ENCODE measurements at regions of chr1 and their contacts with region 1.

Region 1: DNA sequence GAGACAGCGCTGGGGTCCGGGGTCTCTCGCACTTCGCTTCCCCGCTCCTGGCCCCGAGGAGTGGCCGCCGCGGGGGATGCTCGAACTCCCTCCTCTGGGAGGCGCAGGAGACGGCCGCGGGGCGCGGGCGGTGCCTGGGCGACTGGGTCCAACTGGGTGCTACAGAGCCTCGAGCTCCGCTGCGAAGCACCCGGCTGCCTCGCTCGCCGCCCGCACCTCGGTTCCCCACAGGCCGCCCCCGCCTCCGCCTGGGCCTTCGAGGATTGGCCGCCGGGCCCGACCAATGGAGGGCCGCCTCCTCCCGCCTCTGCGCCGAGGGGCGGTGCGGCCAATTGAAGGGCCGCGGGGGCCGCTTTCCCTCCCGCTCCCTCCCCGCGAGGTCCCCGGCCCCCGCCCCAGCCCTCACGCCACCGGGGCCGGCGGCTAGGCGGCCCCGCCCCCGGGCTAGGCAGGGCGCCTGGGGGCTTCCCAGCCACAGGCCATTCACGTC is at the start of gene CNN3:
- DNase-seq: peak; percentile 89 to 96 (median 94)
- ATAC-seq: peak; percentile 90
- H3K4me3 ChIP-seq: peak within 1 kb of the TSS; percentile 75
- H3K4me1 ChIP-seq: peaks cover 34% of the 10 kb centered on the region
- CTCF ChIP-seq: no peak
- total RNA-seq, gene CNN3: 61.3 to 165 (median 129) TPM

Region 2: DNA sequence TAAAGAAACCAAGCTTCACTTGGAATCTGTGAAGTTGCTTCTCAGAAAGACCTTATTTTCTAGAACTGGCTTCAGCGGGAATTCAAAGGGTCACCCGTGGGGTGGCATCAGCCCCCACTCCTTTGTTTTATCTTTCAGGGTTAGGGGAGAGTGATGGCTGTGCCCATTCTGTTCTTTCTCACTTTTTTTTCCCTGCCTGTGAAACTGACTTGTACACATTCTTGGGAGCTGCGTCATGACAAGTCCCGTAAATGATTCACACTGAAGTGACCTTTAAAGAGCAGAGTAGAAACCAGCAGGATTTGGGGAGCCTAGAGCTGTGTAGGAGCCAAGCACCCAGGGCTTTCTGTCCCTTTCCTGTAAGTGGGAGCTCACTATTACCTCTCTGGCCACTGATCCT is 63.0 kb before region 1 on chr1:
- intact Hi-C with region 1: loop called (anchors 5 to 10 kb)
- DNase-seq: peak in 1 of 3 donors; percentile 33
- ATAC-seq: peak; percentile 76
- H3K4me3 ChIP-seq: no peak overlapping the region
- H3K4me1 ChIP-seq: no peaks in the 10 kb centered on the region
- CTCF ChIP-seq: no peak

Region 3: DNA sequence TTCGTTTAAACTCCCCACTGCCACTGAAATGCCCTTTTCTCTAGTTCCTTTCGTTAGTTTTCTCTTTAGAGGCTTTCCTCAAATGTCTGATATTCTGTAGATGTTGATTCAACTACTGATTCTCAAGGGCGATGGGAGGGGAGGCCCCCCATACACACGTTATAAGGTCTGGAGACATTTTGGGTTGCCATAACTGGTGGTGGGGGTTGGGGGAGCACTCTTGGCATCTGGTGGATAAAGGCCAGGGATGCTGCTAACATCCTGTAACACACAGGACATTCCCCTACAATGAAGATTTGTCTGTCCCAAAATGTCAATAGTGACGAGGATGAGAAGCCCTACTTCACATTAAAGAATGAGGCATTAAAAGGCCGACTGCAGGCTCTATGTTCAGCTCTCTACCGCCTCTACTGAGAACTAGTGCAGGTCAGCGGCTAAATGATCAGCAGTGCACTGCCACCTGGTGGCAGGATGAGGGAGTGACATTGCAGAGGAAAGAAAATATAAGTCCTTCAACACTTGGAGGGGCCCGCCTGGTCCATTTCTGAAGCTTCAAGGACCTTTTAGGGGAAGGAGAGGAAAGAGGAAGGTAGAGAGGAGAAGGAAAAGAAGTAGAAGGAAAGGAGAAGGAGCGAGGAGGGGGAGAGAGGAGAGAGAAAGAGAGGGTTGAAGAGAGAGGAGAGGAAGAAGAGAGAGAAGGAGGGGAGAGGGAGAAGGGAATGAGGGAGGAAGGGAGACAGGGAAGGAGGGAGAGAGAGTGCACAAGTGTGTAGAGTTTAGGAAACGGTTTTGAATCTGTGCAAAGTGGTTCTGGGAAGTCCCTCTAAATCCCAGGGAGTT is 116.4 kb after region 1 on chr1:
- intact Hi-C with region 1: loop called in 1 of 2 experiments (anchors 10 kb)
- DNase-seq: peak; percentile 73 to 90 (median 84)
- ATAC-seq: peak; percentile 96
- H3K4me3 ChIP-seq: no peak overlapping the region
- H3K4me1 ChIP-seq: no peaks in the 10 kb centered on the region
- CTCF ChIP-seq: peak; percentile 93

Region 4: DNA sequence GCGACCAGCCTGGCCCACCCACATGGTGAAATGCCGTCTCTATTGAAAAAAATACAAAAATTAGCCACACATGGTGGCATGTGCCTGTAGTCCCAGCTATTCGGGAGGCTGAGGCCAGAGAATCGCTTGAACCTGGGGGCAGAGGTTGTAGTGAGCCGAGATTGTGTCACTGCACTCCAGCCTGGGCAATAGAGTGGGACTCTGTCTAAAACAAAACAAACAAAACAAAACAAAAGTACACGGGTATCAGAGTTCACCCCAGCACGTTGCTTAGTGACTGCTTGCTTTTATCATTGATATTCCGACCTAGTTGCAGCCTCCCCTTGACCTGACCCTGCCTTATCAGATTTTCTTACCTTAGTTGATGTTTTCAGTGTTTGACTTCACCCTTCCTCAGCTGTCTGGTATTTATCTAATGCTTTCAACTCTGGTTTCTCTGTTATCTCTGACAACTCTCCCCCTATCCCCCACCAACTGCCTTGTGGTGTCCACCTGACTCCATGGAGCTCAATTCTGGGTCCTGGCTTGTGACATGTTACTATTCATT is 195.3 kb after region 1 on chr1:
- intact Hi-C with region 1: no loop called
- DNase-seq: no peak
- ATAC-seq: peak; percentile 56
- H3K4me3 ChIP-seq: no peak overlapping the region
- H3K4me1 ChIP-seq: peaks cover 15% of the 10 kb centered on the region
- CTCF ChIP-seq: no peak